Mammary epithelial cell (primary cell): ENCODE measurements at regions of chr5 and their contacts with region 1.

Region 1: GRCh38 chr5:36079200-36079761 is 12.6 kb upstream of the UGT3A2 start:
- DNase-seq: peak; percentile 58
- H3K4me3 ChIP-seq: no peak overlapping the region
- H3K27ac ChIP-seq: no peak overlapping the region
- H3K4me1 ChIP-seq: no peaks in the 10 kb centered on the region
- H3K27me3 ChIP-seq: no peaks in the 10 kb centered on the region
- CTCF ChIP-seq: peak; percentile 71 to 79

Region 2: GRCh38 chr5:35587419-35587818 is 491.9 kb before region 1 on chr5:
- CTCF ChIA-PET with region 1: no interaction called
- dilution Hi-C with region 1: no loop called
- in situ Hi-C with region 1: no loop called
- intact Hi-C with region 1: no loop called
- DNase-seq: no peak
- H3K4me3 ChIP-seq: no peak overlapping the region
- H3K27ac ChIP-seq: no peak overlapping the region
- H3K4me1 ChIP-seq: no peaks in the 10 kb centered on the region
- H3K27me3 ChIP-seq: no peaks in the 10 kb centered on the region
- CTCF ChIP-seq: no peak

Region 3: GRCh38 chr5:36089989-36090564 is 10.8 kb after region 1 on chr5:
- CTCF ChIA-PET with region 1: interaction called, 22 read pairs
- dilution Hi-C with region 1: no loop called
- in situ Hi-C with region 1: no loop called
- intact Hi-C with region 1: no loop called
- DNase-seq: peak; percentile 21
- H3K4me3 ChIP-seq: no peak overlapping the region
- H3K27ac ChIP-seq: no peak overlapping the region
- H3K4me1 ChIP-seq: no peaks in the 10 kb centered on the region
- H3K27me3 ChIP-seq: no peaks in the 10 kb centered on the region
- CTCF ChIP-seq: peak; percentile 21 to 48

Region 4: DNA sequence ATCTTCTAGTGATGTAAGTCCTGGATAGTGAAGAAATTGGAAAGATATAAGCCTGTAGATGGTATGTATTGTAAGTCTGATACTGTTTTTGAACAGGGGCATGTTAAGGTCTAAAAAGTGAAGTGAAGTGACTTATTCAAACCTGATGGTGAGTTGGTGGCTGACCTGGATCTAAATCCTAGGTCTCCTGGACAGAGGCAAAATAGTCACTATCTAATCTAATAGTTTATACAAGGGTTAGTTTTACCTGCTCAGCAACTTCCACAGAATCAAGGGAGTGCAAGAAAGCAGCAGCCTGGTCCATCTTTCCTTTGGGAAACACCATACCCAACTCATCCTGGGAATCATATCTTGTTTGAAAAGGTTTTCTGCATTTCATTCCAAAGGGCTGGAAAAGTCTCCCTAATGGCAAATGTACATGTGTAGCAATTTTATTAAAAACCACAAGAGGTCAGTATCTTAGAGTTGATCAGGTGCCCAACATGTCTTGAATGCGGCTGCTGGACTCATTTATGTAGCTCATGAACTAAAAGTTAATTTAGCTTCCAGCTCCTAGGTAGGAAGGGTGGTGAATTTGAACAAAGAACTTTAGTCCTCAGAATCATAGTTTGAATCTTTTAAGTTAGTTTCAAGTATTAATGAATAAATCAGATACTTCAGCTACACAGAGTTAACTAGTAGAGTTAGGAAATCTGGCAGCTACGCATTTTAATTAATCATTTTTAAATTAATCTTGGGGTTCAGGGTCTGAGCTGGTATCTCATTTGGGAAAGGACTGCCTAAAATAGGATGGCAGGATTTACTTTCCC is 98.6 kb after region 1 on chr5:
- CTCF ChIA-PET with region 1: no interaction called
- dilution Hi-C with region 1: no loop called
- in situ Hi-C with region 1: no loop called
- intact Hi-C with region 1: loop called (anchors 2 kb)
- DNase-seq: peak; percentile 18
- H3K4me3 ChIP-seq: no peak overlapping the region
- H3K27ac ChIP-seq: no peak overlapping the region
- H3K4me1 ChIP-seq: no peaks in the 10 kb centered on the region
- H3K27me3 ChIP-seq: no peaks in the 10 kb centered on the region
- CTCF ChIP-seq: peak; percentile 62 to 65

Region 5: GRCh38 chr5:36305571-36306326 is 226.5 kb after region 1 on chr5:
- CTCF ChIA-PET with region 1: interaction called, 4 read pairs
- dilution Hi-C with region 1: no loop called
- in situ Hi-C with region 1: no loop called
- intact Hi-C with region 1: loop called (anchors 2 kb)
- DNase-seq: peak; percentile 18
- H3K4me3 ChIP-seq: no peak overlapping the region
- H3K27ac ChIP-seq: no peak overlapping the region
- H3K4me1 ChIP-seq: peaks cover 4% of the 10 kb centered on the region
- H3K27me3 ChIP-seq: peaks cover 6% of the 10 kb centered on the region
- CTCF ChIP-seq: peak; percentile 50 to 75

Region 6: DNA sequence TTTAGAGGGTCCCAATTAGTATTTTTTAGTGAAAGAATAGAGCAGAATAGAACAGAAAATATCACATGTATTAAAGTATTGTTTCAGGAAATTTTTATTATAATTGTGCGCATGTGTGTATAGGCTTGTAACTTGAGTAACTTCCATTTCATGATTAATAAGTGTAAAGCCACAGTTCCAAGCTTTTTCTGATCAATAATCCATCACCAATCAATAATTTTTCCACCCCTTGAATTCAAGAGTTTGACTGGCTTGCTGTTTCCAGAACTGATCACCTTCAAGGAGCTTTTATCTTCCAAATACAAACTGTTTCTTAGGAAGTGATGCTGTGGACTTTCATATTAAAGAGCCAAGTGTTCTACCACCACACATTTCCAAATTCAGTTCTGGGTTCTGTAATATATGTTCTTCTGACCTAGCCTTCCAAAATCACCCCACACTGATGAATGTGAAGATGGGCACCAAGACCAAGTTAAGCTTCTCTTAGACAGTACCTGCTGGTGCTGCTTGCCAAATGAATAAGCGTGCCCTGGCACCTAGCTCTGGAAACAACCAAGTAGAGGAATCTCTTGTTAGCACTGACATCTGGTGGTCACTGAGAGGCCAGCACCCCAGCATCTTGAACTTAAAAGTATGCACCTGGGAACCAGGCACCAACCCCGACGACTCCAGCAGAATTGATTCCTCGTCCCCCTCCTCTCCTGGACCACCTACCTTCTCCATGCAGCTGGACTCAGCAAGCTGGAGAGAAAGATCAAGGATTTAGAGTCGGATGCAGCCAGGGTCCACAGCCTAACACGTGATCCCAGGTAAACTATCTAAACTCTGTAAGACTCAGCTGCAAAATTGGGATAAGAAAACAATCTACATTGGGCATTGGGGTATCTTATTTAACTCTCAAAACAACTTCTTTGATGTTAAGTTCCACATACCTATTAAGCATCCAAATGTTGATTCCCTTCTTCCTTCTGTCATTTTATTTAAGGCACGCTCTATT is 616.7 kb after region 1 on chr5:
- CTCF ChIA-PET with region 1: interaction called, 3 read pairs
- dilution Hi-C with region 1: no loop called
- in situ Hi-C with region 1: no loop called
- intact Hi-C with region 1: loop called (anchors 1 kb)
- DNase-seq: peak; percentile 61
- H3K4me3 ChIP-seq: no peak overlapping the region
- H3K27ac ChIP-seq: no peak overlapping the region
- H3K4me1 ChIP-seq: peaks cover 9% of the 10 kb centered on the region
- H3K27me3 ChIP-seq: no peaks in the 10 kb centered on the region
- CTCF ChIP-seq: peak; percentile 80 to 90